Posterior cingulate gyrus (tissue), 11 donors: ENCODE measurements at regions of chr15 and their contacts with region 1.

Region 1: DNA sequence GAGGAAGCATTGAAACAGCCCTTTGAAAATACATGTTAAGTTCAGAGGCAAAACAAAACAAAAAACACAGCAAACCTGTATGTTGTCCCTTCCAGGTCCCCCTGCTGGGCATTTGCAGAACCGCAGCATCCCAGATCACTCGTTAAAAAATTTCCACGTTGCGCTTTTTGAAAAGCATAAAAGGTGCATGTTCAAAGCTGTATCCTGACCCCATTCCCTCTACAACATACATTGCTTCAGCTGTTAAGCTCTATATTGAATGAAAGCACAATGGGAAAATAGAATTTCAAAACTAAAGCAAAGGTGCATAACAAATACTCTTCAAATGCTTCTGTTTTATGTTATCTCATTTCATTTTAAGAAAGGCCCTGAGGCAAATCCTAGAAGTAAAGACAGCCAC is 328.3 kb downstream of the THSD4 start:
- DNase-seq: peak; percentile 29 to 89 (median 62)

Region 2: DNA sequence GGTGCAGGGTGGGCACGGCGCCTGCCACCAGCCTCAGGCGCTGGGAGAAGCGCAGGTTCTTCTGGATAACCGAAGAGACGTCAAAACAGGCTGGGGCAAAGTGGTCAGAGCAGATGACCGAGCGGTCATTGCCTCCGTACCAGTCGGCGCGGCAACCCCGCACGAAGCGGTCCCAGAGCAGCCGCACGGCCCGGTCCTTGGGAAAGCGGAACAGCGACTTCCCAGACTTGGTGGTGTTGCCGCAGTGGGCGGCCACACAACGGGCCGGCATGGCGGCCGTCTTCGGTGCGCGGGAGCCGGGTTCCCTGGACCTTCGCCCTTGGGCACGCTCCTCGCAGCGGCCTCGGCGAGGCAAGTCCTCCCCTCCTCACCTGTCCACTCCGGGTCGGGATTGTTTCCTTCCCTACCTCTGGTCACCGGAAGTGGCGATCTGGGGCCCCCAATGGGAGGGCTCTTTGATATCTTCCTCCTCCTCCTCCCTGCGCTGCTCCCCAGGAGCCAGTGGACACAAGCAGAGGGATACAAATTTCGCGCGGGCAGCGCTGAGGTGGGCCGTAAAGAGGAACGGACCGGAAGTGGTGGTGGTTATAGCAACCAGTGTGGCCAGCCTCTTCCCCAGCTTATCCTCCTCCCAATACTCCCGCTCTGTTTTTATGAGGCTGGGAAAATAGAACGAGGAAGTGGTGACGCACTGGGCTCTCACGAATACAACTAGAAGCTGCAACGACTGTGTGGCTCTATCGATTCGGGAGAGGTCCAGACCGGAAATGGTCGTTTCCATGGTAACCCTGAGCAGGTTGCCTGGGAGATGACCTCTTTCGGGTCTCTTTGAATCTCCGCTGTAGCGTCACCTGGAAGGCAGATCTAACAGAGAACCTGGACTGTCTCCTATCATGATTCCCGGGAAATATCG is 551.3 kb before region 1 on chr15 and contains the starts of genes LRRC49 and THAP10:
- intact Hi-C with region 1: loop called (anchors 5 kb)
- DNase-seq: peak; percentile 77 to 98 (median 89)

Region 3: DNA sequence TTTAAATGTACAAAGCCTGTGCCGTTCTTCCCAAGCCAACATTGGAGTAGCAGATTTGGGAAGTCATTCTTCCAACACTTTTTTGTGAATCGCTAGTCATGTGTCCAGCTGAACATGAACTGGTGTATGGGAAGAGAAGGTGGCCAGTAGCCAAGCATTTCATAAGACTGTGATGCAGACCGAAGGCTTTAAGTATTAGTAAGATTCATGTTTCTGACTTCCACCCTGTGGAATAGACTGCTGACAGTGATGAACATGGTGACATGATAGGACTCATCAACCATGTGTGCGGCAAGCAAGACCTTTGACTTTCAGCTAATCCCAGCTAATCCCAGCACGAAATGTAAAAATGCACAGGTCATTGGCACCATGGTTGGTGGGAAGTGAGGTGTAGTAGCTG is 376.6 kb before region 1 on chr15:
- intact Hi-C with region 1: no loop called
- DNase-seq: no peak

Region 4: GRCh38 chr15:71114896-71115554 is 328.5 kb before region 1 on chr15 and contains the start of gene THSD4:
- intact Hi-C with region 1: loop called (anchors 5 kb)
- DNase-seq: peak in 8 of 10 donors; percentile 8 to 87 (median 38)

Region 5: GRCh38 chr15:71386448-71387236 is 56.9 kb before region 1 on chr15:
- intact Hi-C with region 1: loop called (anchors 2 kb)
- DNase-seq: no peak